PC-3 (cell line): ENCODE measurements at regions of chr2 and their contacts with region 1.

Region 1: GRCh38 chr2:157911750-157912149 is 35.6 kb upstream of the ACVR1 start:
- DNase-seq: no peak
- ATAC-seq: no peak
- H3K4me3 ChIP-seq: no peak overlapping the region
- H3K27ac ChIP-seq: no peak overlapping the region
- H3K4me1 ChIP-seq: no peaks in the 10 kb centered on the region
- H3K27me3 ChIP-seq: no peaks in the 10 kb centered on the region
- CTCF ChIP-seq: no peak

Region 2: GRCh38 chr2:157375384-157375783 is 536.4 kb before region 1 on chr2:
- CTCF ChIA-PET with region 1: no interaction called
- POLR2A ChIA-PET with region 1: no interaction called
- intact Hi-C with region 1: no loop called
- DNase-seq: no peak
- ATAC-seq: no peak
- H3K4me3 ChIP-seq: no peak overlapping the region
- H3K27ac ChIP-seq: no peak overlapping the region
- H3K4me1 ChIP-seq: no peaks in the 10 kb centered on the region
- H3K27me3 ChIP-seq: no peaks in the 10 kb centered on the region
- CTCF ChIP-seq: no peak

Region 3: DNA sequence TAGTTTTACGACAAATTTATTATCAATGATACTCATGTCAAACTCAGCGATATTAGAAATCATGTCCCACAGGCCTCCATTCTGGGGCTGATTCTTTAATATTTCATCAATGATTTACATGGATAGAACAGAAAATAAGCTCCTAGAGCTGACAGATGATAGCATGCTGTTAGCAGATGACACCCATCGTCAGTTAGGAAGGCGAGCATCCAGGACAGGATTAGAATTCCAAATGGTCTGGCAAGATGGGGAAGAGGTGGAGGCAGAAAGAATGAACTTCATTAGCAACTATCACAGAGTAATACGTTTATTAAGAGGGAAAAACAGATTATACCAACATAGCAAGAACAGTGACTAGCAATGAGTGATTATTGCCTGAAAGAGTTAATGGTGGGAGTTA is 10.6 kb after region 1 on chr2:
- CTCF ChIA-PET with region 1: no interaction called
- POLR2A ChIA-PET with region 1: no interaction called
- intact Hi-C with region 1: no loop called
- DNase-seq: no peak
- ATAC-seq: no peak
- H3K4me3 ChIP-seq: no peak overlapping the region
- H3K27ac ChIP-seq: no peak overlapping the region
- H3K4me1 ChIP-seq: no peaks in the 10 kb centered on the region
- H3K27me3 ChIP-seq: peaks cover 19% of the 10 kb centered on the region; the same call in 1 of the 2 replicates
- CTCF ChIP-seq: no peak

Region 4: GRCh38 chr2:157932480-157933159 is 20.9 kb after region 1 on chr2:
- CTCF ChIA-PET with region 1: no interaction called
- POLR2A ChIA-PET with region 1: interaction called, 20 read pairs
- intact Hi-C with region 1: no loop called
- DNase-seq: no peak
- ATAC-seq: no peak
- H3K4me3 ChIP-seq: no peak overlapping the region
- H3K27ac ChIP-seq: no peak overlapping the region
- H3K4me1 ChIP-seq: peaks cover 22% of the 10 kb centered on the region
- H3K27me3 ChIP-seq: no peaks in the 10 kb centered on the region
- CTCF ChIP-seq: no peak

Region 5: GRCh38 chr2:158228943-158229508 is 317.3 kb after region 1 on chr2:
- CTCF ChIA-PET with region 1: no interaction called
- POLR2A ChIA-PET with region 1: no interaction called
- intact Hi-C with region 1: no loop called
- DNase-seq: no peak
- ATAC-seq: no peak
- H3K4me3 ChIP-seq: no peak overlapping the region
- H3K27ac ChIP-seq: no peak overlapping the region
- H3K4me1 ChIP-seq: no peaks in the 10 kb centered on the region
- H3K27me3 ChIP-seq: peaks cover 27% of the 10 kb centered on the region; the same call in 1 of the 2 replicates
- CTCF ChIP-seq: no peak